ENCODE measurements at regions of chr1 and their contacts with region 1.

Region 1: DNA sequence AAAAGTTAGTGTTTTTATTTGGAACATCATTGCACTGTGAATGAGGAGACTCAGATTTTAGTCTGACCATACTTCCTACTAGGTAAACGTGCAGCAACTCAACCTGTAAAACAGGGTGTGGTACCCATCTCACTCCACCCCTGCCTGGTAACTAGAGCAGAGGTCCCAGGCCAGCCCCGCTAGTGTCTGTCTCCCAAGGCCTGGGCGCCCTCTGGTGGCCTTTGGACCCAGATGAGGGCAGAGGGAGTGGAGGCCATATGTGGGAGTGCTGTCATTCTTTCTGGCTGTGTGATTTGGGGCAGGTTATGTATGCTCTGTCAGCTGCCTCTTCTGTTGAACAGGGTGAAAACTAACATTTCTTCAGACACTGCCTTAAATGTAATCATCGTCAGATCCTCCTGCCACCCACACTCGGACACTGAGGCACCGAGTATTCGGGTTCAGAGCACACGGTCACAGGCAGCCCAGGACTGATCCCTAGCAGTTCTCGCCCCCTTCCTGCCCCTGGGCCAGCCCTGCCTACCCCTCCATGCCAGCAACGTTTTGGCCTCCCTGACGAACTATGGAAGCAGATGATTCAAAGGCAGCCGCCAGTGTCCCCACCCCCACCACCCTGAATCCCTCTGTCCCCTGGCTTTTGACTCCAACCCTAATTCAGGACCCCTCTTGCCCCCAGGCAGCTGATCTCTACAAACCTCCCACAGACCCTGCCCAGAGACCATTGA is 76.0 kb downstream of the CD247 start:
- DNase-seq: peak; percentile 55
- ATAC-seq: peak; percentile 94
- H3K4me3 ChIP-seq: no peak overlapping the region
- H3K27ac ChIP-seq: no peak overlapping the region
- H3K4me1 ChIP-seq: no peaks in the 10 kb centered on the region
- H3K27me3 ChIP-seq: peaks cover 36% of the 10 kb centered on the region
- CTCF ChIP-seq: peak; percentile 86
- POLR2A ChIP-seq: no peak
- RAD21 ChIP-seq: peak; percentile 86

Region 2: DNA sequence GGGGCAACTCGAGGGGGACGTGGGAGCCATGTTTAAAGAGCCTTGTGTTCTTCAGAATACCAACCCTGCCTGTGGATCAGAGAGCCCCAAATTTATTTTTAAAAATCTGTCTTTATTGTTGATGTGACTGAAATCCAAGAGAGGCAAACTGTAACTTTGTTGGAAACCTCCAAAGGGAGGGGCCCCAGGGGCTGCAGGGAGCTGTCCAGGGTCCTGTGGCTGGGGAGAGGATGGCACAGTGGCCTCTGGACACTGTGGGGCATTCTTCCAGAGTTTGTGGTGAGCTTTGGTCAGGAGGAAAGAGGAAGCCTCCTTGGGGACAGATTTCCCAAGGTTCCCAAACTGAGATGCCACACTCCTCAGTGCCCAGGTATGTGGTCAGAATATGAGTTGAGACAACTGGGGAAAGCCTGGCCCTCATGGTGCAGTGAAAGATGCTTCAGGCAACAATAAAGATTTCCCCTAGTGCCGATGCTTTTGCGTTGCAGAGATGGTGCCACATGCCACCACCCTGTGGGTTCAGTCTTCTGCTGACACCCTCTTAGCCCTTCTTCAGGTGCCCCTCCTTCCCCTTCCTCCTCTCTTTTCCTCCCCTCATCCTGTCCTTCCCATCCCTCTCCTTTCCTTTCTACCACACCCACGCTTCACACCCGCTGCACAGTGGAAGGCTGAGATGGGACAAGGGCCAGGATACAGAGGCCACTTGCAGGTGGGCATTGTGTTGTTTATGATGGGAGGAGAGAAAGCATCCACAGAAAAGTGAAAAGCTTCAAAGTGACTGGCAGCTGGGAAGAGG is 1492.8 kb before region 1 on chr1:
- CTCF ChIA-PET with region 1: no interaction called
- POLR2A ChIA-PET with region 1: no interaction called
- dilution Hi-C with region 1: no loop called
- in situ Hi-C with region 1: no loop called
- intact Hi-C with region 1: no loop called
- DNase-seq: no peak
- ATAC-seq: peak; percentile 73
- H3K4me3 ChIP-seq: no peak overlapping the region
- H3K27ac ChIP-seq: no peak overlapping the region
- H3K4me1 ChIP-seq: no peaks in the 10 kb centered on the region
- H3K27me3 ChIP-seq: no peaks in the 10 kb centered on the region
- CTCF ChIP-seq: no peak
- POLR2A ChIP-seq: no peak
- RAD21 ChIP-seq: no peak

Region 3: GRCh38 chr1:167066333-167067122 is 375.8 kb before region 1 on chr1:
- CTCF ChIA-PET with region 1: interaction called, 3 read pairs
- POLR2A ChIA-PET with region 1: no interaction called
- dilution Hi-C with region 1: no loop called
- in situ Hi-C with region 1: loop called (anchors 5 kb)
- intact Hi-C with region 1: loop called (anchors 1 kb)
- DNase-seq: peak; percentile 15
- ATAC-seq: peak; percentile 98
- H3K4me3 ChIP-seq: peak overlapping the region; percentile 23; the same call in 1 of the 2 replicates
- H3K27ac ChIP-seq: no peak overlapping the region
- H3K4me1 ChIP-seq: no peaks in the 10 kb centered on the region
- H3K27me3 ChIP-seq: peaks cover 15% of the 10 kb centered on the region
- CTCF ChIP-seq: peak; percentile 91
- POLR2A ChIP-seq: no peak
- RAD21 ChIP-seq: peak; percentile 92

Region 4: DNA sequence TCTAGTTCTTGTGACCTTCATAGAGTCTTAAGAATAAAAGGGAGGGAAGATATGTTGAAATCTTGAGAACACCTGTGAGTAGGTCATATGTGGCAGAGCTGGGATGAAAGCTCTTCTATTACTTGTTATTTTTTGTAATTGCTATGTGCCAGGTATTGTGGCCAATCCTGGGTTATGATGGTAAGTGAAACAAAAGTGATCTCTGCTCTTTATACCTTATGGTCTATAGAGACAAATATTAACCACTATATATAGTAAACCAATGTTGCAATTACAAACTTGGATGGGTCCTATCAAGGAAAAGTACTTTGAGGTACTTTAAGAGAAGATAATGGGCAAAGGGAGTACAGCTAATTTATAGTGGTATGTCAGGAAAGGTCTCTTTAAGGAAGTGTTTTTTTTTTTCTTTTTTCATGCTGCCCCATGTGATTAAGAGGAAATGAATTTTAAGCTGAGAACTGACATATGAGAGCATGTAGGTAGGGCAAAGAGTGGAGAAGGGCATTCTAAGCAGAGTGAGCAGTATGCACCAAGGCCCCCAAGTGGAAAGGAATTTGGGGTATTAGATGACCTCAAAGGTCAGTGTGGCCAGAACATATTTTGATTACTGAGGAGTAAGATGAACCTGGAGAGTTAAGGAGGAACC is 178.3 kb before region 1 on chr1:
- CTCF ChIA-PET with region 1: interaction called, 25 read pairs
- POLR2A ChIA-PET with region 1: no interaction called
- dilution Hi-C with region 1: loop called (anchors 25 kb)
- in situ Hi-C with region 1: loop called (anchors 5 kb)
- intact Hi-C with region 1: loop called (anchors 1 kb)
- DNase-seq: no peak
- ATAC-seq: no peak
- H3K4me3 ChIP-seq: no peak overlapping the region
- H3K27ac ChIP-seq: no peak overlapping the region
- H3K4me1 ChIP-seq: peaks cover under 1% of the 10 kb centered on the region; the same call in 1 of the 2 replicates
- H3K27me3 ChIP-seq: no peaks in the 10 kb centered on the region
- CTCF ChIP-seq: no peak
- POLR2A ChIP-seq: no peak
- RAD21 ChIP-seq: no peak

Region 5: GRCh38 chr1:167273027-167273800 is 169.1 kb before region 1 on chr1:
- CTCF ChIA-PET with region 1: interaction called, 25 read pairs
- POLR2A ChIA-PET with region 1: no interaction called
- dilution Hi-C with region 1: loop called (anchors 25 kb)
- in situ Hi-C with region 1: loop called (anchors 5 kb)
- intact Hi-C with region 1: loop called (anchors 1 kb)
- DNase-seq: peak; percentile 8
- ATAC-seq: no peak; the same call in 1 of the 2 replicates
- H3K4me3 ChIP-seq: no peak overlapping the region
- H3K27ac ChIP-seq: no peak overlapping the region
- H3K4me1 ChIP-seq: no peaks in the 10 kb centered on the region
- H3K27me3 ChIP-seq: no peaks in the 10 kb centered on the region
- CTCF ChIP-seq: no peak
- POLR2A ChIP-seq: no peak
- RAD21 ChIP-seq: no peak

Region 6: DNA sequence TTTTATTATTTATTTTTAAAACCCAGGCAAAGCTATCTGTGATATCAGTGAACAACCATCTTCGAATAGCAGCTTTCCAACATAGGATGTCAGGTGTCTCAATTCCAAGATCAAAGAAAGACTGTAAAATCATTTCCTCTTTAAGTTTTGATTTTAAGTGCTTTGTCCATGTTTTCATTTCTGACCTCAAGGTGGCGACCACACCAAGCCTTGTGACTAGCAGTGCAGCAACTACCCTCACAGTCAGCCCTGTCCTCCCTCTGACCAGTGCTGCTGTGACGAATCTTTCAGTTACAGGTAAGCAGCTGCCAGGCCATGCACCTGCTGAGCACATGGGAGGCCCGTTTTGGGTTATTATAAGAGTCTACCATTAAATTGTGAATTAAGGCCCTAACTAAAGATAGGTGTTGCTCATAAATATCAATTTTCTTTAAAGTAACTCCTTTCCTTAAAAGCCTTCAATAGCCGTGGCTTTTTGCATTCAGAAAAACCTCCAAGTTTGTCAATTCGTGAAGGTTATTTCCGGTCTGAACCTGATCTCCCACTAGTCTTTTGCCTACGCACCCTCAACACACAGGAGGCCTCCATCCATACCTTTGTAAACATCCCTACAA is 40.9 kb before region 1 on chr1:
- CTCF ChIA-PET with region 1: no interaction called
- POLR2A ChIA-PET with region 1: no interaction called
- dilution Hi-C with region 1: no loop called
- in situ Hi-C with region 1: no loop called
- intact Hi-C with region 1: loop called (anchors 1 kb)
- DNase-seq: peak; percentile 55
- ATAC-seq: peak; percentile 83
- H3K4me3 ChIP-seq: no peak overlapping the region
- H3K27ac ChIP-seq: no peak overlapping the region
- H3K4me1 ChIP-seq: no peaks in the 10 kb centered on the region
- H3K27me3 ChIP-seq: no peaks in the 10 kb centered on the region
- CTCF ChIP-seq: peak; percentile 55
- POLR2A ChIP-seq: no peak
- RAD21 ChIP-seq: peak; percentile 60

Region 7: GRCh38 chr1:167428395-167428794 is 13.9 kb before region 1 on chr1:
- CTCF ChIA-PET with region 1: no interaction called
- POLR2A ChIA-PET with region 1: no interaction called
- dilution Hi-C with region 1: no loop called
- in situ Hi-C with region 1: no loop called
- intact Hi-C with region 1: no loop called
- DNase-seq: no peak
- ATAC-seq: no peak
- H3K4me3 ChIP-seq: no peak overlapping the region
- H3K27ac ChIP-seq: no peak overlapping the region
- H3K4me1 ChIP-seq: no peaks in the 10 kb centered on the region; the same call in 1 of the 2 replicates
- H3K27me3 ChIP-seq: no peaks in the 10 kb centered on the region; the same call in 1 of the 2 replicates
- CTCF ChIP-seq: no peak
- POLR2A ChIP-seq: no peak
- RAD21 ChIP-seq: no peak

Region 8: DNA sequence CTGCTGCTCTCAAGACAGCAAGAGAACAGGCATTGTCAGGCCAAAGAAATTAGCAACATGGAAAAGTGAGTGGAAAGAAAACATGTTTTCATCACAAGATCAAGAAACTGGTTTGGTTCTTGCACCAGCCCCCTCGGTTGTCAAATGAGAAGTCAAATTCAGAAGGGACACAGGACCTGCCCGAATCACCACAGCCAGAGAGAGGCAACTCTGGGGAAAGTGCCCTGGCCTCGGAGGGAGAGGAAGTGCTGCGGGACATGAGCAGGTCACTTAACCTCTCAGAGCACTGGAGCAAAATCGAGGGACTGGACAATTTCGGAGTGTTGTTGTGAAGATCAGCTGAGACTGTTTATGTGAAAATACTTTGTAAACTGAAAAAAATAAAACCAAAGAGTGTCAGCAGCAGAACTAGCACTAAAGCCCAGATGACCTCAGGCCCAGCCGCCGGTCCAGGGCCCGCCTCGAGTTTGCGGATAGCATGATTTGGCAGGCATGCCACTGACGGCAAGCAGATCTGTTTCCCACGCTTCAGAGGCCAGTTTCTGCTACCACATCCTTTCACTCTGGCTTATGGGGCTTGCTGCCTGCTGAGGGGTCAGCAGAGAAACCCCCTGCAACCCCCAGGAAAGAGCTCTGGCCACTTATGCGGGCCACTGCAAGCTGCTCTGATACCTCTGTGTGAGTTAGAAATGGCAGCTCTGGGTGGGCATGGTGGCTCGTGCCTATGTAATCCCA is 44.0 kb after region 1 on chr1:
- CTCF ChIA-PET with region 1: no interaction called
- POLR2A ChIA-PET with region 1: no interaction called
- dilution Hi-C with region 1: no loop called
- in situ Hi-C with region 1: no loop called
- intact Hi-C with region 1: no loop called
- DNase-seq: no peak
- ATAC-seq: no peak
- H3K4me3 ChIP-seq: no peak overlapping the region
- H3K27ac ChIP-seq: no peak overlapping the region
- H3K4me1 ChIP-seq: no peaks in the 10 kb centered on the region
- H3K27me3 ChIP-seq: peaks cover 16% of the 10 kb centered on the region; the same call in 1 of the 2 replicates
- CTCF ChIP-seq: no peak
- POLR2A ChIP-seq: no peak
- RAD21 ChIP-seq: no peak